ENCODE measurements at regions of chr7 and their contacts with region 1.

Region 1: GRCh38 chr7:135911099-135911498 is 66.1 kb downstream of the MTPN start:
- DNase-seq: no peak
- ATAC-seq: no peak
- H3K4me3 Mint-ChIP-seq: no peak overlapping the region
- H3K27ac Mint-ChIP-seq: no peak overlapping the region
- H3K4me1 Mint-ChIP-seq: no peaks in the 10 kb centered on the region
- H3K27me3 Mint-ChIP-seq: no peaks in the 10 kb centered on the region
- CTCF ChIP-seq: no peak

Region 2: GRCh38 chr7:135801045-135801693 is 109.9 kb before region 1 on chr7:
- CTCF ChIA-PET with region 1: no interaction called
- POLR2A ChIA-PET with region 1: no interaction called
- intact Hi-C with region 1: no loop called
- DNase-seq: no peak
- ATAC-seq: peak; percentile 49
- H3K4me3 Mint-ChIP-seq: no peak overlapping the region
- H3K27ac Mint-ChIP-seq: no peak overlapping the region
- H3K4me1 Mint-ChIP-seq: peaks cover 7% of the 10 kb centered on the region
- H3K27me3 Mint-ChIP-seq: peaks cover 17% of the 10 kb centered on the region
- CTCF ChIP-seq: peak; percentile 28

Region 3: DNA sequence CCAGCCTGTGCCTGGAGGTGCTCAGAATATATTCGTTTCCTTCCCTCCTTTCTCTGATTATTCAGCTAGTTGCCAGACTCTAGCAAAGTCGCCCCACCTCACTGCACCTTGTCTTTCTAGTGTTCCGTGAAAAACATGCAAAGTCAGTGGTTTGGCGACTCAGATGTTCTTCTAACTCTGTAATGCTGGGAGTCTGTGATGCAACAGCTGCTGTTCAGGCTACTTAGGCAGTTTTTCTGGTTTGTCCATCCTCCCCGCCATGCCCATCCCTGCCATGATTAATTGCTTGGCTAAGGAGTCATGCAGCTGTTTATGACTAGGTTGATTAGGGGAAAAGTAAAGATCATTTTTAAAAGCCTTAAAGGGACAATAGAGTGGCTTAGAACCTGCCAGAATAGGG is 33.3 kb before region 1 on chr7:
- CTCF ChIA-PET with region 1: no interaction called
- POLR2A ChIA-PET with region 1: no interaction called
- intact Hi-C with region 1: no loop called
- DNase-seq: no peak
- ATAC-seq: no peak
- H3K4me3 Mint-ChIP-seq: no peak overlapping the region
- H3K27ac Mint-ChIP-seq: no peak overlapping the region
- H3K4me1 Mint-ChIP-seq: no peaks in the 10 kb centered on the region
- H3K27me3 Mint-ChIP-seq: peaks cover 17% of the 10 kb centered on the region
- CTCF ChIP-seq: no peak

Region 4: DNA sequence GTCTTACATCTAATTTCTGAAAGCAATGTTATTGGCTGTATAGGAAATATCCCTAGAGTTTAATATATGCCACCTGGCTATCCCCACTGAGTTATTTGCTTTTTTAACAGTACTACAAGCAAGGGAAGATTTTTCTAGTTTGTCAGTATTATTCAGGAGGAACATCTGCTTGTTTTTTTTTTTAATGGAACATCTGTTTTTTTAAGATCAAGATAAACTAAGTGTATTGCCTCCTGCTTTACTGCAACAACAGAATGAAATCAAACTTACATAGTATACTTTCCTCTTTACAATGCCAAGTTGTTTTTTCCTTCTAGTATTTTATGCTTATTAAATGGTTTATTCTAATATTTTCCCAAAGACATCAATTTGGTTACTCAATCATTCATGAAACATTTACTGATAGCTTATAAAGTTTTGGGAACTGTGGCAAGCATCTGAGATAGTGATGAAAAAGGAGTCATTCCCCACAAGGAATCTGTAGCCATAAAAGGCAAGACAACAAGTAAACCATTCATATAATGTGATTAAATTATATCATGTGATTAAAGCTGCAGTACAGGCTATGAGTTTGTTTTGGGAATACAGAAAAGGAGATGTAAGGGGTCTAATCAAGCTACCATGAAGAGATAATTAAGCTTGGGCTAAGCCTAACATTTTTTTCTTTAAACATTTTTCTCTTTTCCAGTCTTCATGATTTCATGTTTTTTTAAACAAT is 48.7 kb after region 1 on chr7:
- CTCF ChIA-PET with region 1: no interaction called
- POLR2A ChIA-PET with region 1: interaction called, 18 read pairs
- intact Hi-C with region 1: no loop called
- DNase-seq: no peak
- ATAC-seq: no peak
- H3K4me3 Mint-ChIP-seq: peak overlapping the region; percentile 11
- H3K27ac Mint-ChIP-seq: peak overlapping the region; percentile 46
- H3K4me1 Mint-ChIP-seq: peaks cover 94% of the 10 kb centered on the region
- H3K27me3 Mint-ChIP-seq: no peaks in the 10 kb centered on the region
- CTCF ChIP-seq: no peak

Measured in activated B cell treated with CpG ODN at 0.5 μM for 24 hours (primary cell).